ENCODE measurements at regions of chr5 and their contacts with region 1.

Region 1: GRCh38 chr5:126023883-126024515 is 399.2 kb upstream of the GRAMD2B start:
- DNase-seq: no peak
- H3K4me3 ChIP-seq: no peak overlapping the region
- H3K27ac ChIP-seq: no peak overlapping the region
- H3K4me1 ChIP-seq: no peaks in the 10 kb centered on the region
- H3K27me3 ChIP-seq: no peaks in the 10 kb centered on the region
- CTCF ChIP-seq: no peak

Region 2: DNA sequence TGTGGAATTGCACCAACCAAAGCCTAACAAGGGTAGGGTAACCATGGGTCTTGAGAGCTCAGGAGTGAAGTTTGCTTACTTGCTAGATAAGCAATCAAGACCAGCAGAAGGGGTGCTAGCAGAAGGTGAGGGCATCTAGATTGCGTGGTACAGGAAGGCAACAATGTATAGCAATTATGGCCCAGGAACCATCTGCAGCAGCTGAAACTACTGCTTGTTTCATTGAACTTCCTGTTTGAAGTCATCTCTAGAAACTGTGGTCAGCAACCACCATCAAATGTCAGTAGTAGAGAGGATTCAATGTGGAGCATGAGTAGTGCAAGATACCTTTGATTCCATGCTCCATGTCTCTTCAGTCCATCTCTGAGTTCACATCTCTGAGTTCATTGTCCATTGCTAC is 62.8 kb before region 1 on chr5:
- CTCF ChIA-PET with region 1: no interaction called
- dilution Hi-C with region 1: loop called (anchors 10 kb)
- in situ Hi-C with region 1: no loop called
- intact Hi-C with region 1: no loop called
- DNase-seq: no peak
- H3K4me3 ChIP-seq: no peak overlapping the region
- H3K27ac ChIP-seq: no peak overlapping the region
- H3K4me1 ChIP-seq: no peaks in the 10 kb centered on the region
- H3K27me3 ChIP-seq: no peaks in the 10 kb centered on the region
- CTCF ChIP-seq: no peak

Measured in mammary epithelial cell (primary cell).